ENCODE measurements at regions of chr12 and their contacts with region 1.

Region 1: GRCh38 chr12:63450816-63451215 is 217.5 kb downstream of the DPY19L2 start:
- DNase-seq: no peak
- H3K4me3 ChIP-seq: no peak overlapping the region
- H3K27ac ChIP-seq: no peak overlapping the region
- H3K4me1 ChIP-seq: no peaks in the 10 kb centered on the region
- H3K27me3 ChIP-seq: no peaks in the 10 kb centered on the region
- CTCF ChIP-seq: no peak

Region 2: GRCh38 chr12:63353559-63353958 is 97.3 kb before region 1 on chr12:
- CTCF ChIA-PET with region 1: no interaction called
- dilution Hi-C with region 1: no loop called
- in situ Hi-C with region 1: no loop called
- intact Hi-C with region 1: no loop called
- DNase-seq: peak; percentile 64
- H3K4me3 ChIP-seq: no peak overlapping the region
- H3K27ac ChIP-seq: no peak overlapping the region
- H3K4me1 ChIP-seq: peaks cover 3% of the 10 kb centered on the region
- H3K27me3 ChIP-seq: peaks cover under 1% of the 10 kb centered on the region
- CTCF ChIP-seq: peak; percentile 37

Region 3: DNA sequence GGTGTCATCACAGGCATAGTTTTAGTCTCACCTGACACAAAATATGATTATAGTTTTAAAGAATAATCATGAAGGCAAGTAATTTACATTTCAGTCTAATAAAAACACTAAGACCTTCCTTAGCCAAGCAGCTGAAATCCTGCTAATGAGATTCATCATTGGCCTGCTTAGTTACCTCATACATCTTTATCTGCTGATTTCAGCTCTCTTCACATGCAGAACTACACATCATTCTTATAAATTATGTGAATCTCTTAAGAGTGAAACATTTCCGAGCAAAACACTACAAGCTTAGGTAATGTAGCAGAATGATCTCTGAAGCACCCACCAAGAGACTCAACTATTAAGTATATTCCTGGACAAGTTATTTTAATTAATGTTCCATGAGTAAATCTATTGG is 19.3 kb after region 1 on chr12:
- CTCF ChIA-PET with region 1: interaction called, 13 read pairs
- dilution Hi-C with region 1: no loop called
- in situ Hi-C with region 1: no loop called
- intact Hi-C with region 1: no loop called
- DNase-seq: no peak
- H3K4me3 ChIP-seq: no peak overlapping the region
- H3K27ac ChIP-seq: no peak overlapping the region
- H3K4me1 ChIP-seq: no peaks in the 10 kb centered on the region
- H3K27me3 ChIP-seq: peaks cover 2% of the 10 kb centered on the region
- CTCF ChIP-seq: no peak

Measured in mammary epithelial cell (primary cell).